ENCODE measurements at regions of chrX and their contacts with region 1.

Region 1: GRCh38 chrX:136608295-136609171 is 39.4 kb upstream of the CD40LG start:
- DNase-seq: peak; percentile 68
- H3K4me3 Mint-ChIP-seq: peak overlapping the region; percentile 40
- H3K27ac Mint-ChIP-seq: peak overlapping the region; percentile 85
- H3K4me1 Mint-ChIP-seq: peaks cover 51% of the 10 kb centered on the region
- H3K27me3 Mint-ChIP-seq: no peaks in the 10 kb centered on the region

Region 2: DNA sequence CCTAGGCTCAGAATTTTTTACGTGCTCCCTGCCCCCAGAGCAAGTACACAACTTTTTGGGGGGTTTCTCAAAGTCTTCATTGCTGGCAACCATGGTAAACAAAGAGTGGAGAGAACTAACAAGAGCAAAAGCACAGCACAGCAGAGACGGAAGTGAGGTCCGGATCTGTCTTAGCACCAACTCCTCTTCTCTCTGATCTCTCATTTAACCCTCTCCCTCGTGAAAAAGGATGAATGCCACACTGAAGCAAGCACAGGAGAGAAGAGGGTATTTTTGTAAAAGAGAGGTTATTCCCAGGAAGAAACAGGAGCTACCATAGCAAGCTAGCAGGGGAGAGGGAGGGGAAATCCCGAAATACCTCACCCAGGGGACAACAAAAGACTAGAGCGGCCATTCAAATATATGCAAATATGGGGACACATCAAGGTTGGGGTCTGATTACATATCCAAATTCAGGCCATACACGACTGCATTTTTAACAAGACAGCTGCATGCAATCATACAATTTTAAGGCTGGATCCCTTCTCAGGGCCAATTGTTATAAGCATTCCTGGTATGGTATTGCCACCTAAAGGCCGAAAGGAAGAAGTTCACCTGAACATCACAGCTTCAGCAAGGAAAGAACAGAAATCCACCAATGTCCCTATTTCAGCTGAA is 86.0 kb after region 1 on chrX:
- CTCF ChIA-PET with region 1: interaction called, 15 read pairs
- POLR2A ChIA-PET with region 1: no interaction called
- DNase-seq: peak; percentile 41
- H3K4me3 Mint-ChIP-seq: peak overlapping the region; percentile 68
- H3K27ac Mint-ChIP-seq: peak overlapping the region; percentile 96
- H3K4me1 Mint-ChIP-seq: peaks cover 76% of the 10 kb centered on the region
- H3K27me3 Mint-ChIP-seq: no peaks in the 10 kb centered on the region